Cardiac septum (tissue), 1 donor: ENCODE measurements at regions of chr12 and their contacts with region 1.

Region 1: GRCh38 chr12:27193854-27194544 is 50.1 kb upstream of the STK38L start:
- DNase-seq: peak; percentile 80

Region 2: GRCh38 chr12:27083861-27084394 is 110.1 kb before region 1 on chr12:
- intact Hi-C with region 1: no loop called
- DNase-seq: no peak

Region 3: DNA sequence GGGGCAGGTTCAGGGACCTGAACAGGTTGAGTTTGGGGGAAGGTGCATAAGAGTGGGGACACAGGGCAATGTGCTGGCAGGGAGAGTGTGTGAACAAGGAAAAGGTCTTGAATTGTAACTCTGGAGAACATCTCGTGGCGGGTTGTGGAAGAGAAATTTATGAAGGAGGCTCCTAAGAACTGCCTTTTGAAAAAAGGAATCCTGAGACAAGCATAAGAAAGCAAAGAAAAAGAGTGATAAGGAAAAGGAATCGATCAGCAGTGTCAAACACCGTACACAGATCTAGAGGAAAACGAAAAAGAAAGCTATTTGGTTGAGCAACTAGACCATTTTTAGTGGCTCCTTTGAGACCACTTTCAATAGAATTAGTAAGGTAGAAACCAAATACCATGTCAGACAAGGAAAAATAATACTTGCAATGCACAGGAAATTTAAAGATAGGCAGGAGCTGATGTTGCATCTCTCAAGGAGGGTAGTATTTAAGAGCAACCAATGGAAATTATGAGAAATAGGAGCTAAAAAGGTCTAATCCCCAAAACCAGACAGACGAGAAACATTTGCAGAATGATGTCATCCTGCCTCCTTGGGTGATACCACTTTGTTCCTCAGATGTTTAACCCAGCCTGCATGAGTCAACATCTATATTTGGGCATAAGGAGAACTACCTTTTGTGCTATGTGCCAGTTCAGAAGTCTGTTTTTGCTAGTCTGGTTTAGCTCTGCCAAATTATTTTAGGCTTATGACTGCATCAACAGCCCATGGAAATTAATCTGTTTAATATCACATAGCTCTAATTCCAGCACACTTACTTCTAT is 14.4 kb before region 1 on chr12:
- intact Hi-C with region 1: loop called (anchors 1 kb)
- DNase-seq: no peak

Region 4: DNA sequence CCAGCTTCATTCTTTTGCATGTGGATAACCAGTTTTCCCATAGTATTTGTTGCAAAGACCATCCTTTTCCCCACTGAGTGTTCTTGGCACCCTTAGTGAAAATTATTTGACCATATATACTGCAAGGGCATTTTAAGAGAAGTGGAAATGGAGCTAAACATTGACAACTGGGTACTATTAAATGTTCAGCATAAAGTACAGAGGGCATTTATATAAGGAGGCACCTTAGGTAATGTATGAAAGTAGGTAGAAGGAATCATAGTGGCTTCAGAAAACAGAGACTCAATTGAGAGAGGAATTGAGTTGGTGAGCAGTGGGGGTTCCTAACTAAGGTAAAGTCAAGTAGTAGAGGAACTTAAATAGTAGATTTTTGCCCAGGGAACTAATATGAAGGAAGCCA is 218.0 kb after region 1 on chr12:
- intact Hi-C with region 1: no loop called
- DNase-seq: no peak

Region 5: DNA sequence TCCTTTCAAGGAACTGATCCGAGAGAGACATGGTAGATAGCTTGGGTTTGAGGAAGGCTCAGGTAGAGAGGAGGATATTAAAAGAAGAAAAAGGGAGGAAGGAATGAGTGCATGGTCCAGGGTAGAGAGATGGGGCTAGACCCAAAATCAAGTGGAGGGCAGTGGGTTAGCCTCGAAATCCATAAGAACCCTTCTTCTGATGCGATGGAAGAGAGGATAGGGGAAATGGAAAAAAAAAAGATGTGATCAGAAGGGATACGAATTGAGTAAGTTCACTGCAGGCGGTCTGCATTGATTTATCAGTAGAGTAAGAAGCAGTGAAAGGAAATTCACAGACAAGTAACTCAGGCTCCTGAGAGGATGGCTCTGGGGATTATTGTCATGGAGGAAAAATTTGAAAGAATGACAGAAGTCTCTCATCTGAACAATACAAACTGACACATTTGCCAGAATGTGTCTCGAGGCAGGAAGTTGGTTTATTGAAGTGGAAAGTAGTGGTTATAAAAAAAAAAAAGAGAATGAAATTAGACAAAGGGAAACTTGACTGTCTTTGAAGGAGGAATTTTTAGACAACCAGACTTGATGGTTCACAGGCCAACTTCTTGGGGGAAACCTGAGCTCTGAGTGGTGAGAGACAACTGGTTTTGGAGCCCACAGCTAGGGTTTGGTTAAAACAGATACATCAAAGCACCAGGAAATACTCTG is 340.2 kb after region 1 on chr12:
- intact Hi-C with region 1: no loop called
- DNase-seq: no peak